ENCODE measurements at regions of chr6 and their contacts with region 1.

Region 1: DNA sequence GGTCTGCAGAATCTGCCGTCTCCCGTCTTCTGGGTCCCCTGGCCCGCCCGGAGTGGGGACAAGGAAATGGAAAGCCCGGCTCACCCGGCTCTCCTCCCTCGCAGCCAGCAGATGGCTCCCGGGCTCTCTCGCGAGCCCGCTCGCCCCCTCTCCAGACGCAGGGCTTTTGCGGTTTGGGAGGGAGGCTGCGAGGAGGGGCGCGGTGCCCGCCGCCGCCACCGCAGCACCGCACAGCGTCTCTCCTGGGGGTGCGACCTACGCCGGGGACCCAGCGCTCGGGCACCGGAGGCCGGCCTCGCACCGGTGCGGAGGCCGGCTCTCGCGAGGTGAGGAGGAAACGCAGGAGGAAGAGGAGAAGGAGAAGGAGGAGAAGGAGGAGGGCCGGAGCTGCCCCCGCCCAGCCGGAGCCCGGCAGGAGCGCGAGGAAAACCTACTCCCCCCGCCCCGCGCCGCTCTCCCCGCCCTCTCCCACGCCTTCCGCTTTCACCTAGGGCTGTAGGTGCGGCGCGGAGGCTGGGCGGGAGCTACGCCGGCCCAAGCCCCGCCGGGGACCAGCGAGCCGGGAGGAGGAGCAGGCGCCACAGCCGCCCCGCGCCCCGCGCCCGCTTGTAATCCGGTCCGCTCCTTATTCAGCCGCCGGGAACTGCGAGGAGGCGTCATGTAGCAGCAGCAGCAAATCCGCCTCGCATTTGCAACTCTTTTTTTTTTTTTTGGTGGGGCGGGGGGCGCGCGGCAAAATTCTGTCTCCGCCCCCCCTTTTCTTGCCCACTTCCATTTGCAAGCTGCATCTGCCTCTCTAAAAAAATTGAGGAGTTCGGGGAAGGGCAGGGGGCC is at the start of gene CARMIL1:
- DNase-seq: peak; percentile 75 to 78
- ATAC-seq: peak; percentile 88 to 96 (median 94)
- H3K4me3 ChIP-seq: peak within 1 kb of the TSS; percentile 59 to 96 (median 79)
- H3K27ac ChIP-seq: peak within 1 kb of the TSS; percentile 53 to 84 (median 67)
- H3K4me1 ChIP-seq: peaks cover 8 to 26% (median 18%) of the 10 kb centered on the region in 9 donors
- H3K27me3 ChIP-seq: peaks cover 0 to 33% (median 14%) of the 10 kb centered on the region in 7 donors
- CTCF ChIP-seq: peak; percentile 46 to 84 (median 69)
- total RNA-seq, gene CARMIL1: 1.2 to 10.3 (median 4.1) TPM

Region 2: DNA sequence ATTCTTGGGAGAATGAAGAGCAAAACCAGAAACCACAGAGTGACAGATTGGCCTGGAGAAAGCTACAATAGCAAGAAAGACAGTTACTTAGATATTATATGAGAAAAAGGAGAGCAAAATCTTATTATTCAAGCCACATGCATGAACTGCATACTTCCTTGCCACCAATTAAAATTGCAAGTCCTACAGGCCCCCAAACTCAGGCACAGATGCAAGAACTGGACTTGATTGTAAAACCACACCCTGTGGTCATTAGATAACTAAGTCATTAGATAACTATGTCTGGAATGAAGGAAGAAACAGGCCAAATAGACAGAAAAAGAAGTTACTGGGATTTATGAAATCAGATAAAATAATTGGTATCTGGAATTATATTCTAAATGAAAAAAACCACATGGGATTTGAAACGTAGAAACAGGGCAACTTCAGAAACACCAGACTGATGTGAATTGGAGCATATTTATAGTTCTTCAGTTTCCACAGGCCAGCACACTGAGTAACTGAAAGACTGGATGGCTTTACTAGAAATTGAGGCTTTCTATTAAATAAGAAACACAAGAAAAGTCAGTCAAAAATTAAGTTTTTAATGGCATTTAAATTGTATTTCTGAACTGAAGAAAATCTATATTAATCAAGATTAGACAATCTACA is 49.3 kb before region 1 on chr6:
- intact Hi-C with region 1: loop called in 1 of 10 experiments (anchors 2 kb)
- DNase-seq: no peak
- ATAC-seq: peak in 4 of 8 donors; percentile 25 to 61 (median 46)
- H3K4me3 ChIP-seq: no peak overlapping the region
- H3K27ac ChIP-seq: peak overlapping the region in 4 of 10 donors; percentile 33 to 47 (median 41)
- H3K4me1 ChIP-seq: peaks cover 0 to 15% (median 0%) of the 10 kb centered on the region in 9 donors
- H3K27me3 ChIP-seq: no peaks in the 10 kb centered on the region
- CTCF ChIP-seq: no peak

Region 3: GRCh38 chr6:25263657-25264056 is 15.5 kb before region 1 on chr6:
- intact Hi-C with region 1: no loop called
- DNase-seq: no peak
- ATAC-seq: no peak
- H3K4me3 ChIP-seq: no peak overlapping the region
- H3K27ac ChIP-seq: no peak overlapping the region
- H3K4me1 ChIP-seq: peaks cover 0 to 7% (median 0%) of the 10 kb centered on the region in 9 donors
- H3K27me3 ChIP-seq: no peaks in the 10 kb centered on the region
- CTCF ChIP-seq: no peak

Region 4: GRCh38 chr6:25360621-25361020 is 81.5 kb after region 1 on chr6:
- intact Hi-C with region 1: loop called in 1 of 10 experiments (anchors 5 kb)
- DNase-seq: no peak
- ATAC-seq: no peak
- H3K4me3 ChIP-seq: no peak overlapping the region
- H3K27ac ChIP-seq: peak overlapping the region in 2 of 10 donors; percentile 42 to 51
- H3K4me1 ChIP-seq: peaks cover 0 to 42% (median 18%) of the 10 kb centered on the region in 9 donors
- H3K27me3 ChIP-seq: no peaks in the 10 kb centered on the region
- CTCF ChIP-seq: no peak

Region 5: GRCh38 chr6:25490018-25490801 is 211.1 kb after region 1 on chr6:
- intact Hi-C with region 1: loop called (anchors 1 to 5 kb)
- DNase-seq: peak; percentile 37 to 74
- ATAC-seq: peak; percentile 83 to 90 (median 86)
- H3K4me3 ChIP-seq: no peak overlapping the region
- H3K27ac ChIP-seq: peak overlapping the region in 1 of 10 donors; percentile 25
- H3K4me1 ChIP-seq: peaks cover 0 to 26% (median 20%) of the 10 kb centered on the region in 9 donors
- H3K27me3 ChIP-seq: no peaks in the 10 kb centered on the region
- CTCF ChIP-seq: peak; percentile 48 to 87 (median 80)

Region 6: DNA sequence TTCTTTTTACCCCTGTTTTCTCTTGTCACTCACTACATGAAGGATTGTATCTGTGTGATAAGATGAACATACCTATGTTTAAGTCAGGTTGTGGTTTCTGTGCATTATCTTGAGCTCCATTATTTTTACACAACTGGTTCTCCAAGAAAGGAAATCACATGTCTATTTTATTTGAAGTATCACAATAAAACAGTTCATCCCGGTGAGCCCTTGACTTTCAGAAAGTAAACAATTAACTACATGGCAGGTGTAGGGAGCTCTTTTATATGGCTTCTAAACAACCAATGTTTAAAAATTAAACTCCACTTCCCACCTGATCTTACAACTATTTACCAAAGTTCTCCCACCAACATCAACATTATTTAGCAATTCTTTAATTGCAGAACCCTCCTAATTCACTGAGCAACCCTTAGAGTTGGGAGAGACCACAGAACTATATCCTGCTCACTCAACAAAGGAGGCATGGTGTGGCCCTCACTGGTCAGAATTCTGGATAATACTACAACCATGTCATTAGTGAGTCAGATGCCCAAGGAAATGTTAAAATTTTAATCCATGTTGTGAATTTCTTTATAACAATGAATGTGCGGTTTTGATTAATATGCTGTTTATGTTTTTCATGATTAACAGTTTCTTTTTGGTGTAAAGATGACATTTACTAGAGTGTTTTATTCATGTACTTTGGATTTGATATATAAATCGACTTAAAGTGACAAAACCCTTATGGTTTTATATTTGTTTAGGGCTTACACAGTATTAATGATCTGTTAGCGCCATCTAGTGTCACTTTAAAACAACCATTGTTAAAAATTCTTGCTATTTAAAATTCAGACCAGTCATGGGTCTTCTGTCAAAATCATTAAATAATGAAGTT is 322.9 kb after region 1 on chr6:
- intact Hi-C with region 1: loop called in 1 of 10 experiments (anchors 10 kb)
- DNase-seq: no peak
- ATAC-seq: no peak
- H3K4me3 ChIP-seq: no peak overlapping the region
- H3K27ac ChIP-seq: no peak overlapping the region
- H3K4me1 ChIP-seq: no peaks in the 10 kb centered on the region
- H3K27me3 ChIP-seq: peaks cover 0 to 5% (median 0%) of the 10 kb centered on the region in 7 donors
- CTCF ChIP-seq: peak; percentile 26 to 76 (median 59)